Activated naive CD4-positive, alpha-beta T cell treated with anti-CD3 and anti-CD28 coated beads for 36 hours (primary cell): ENCODE measurements at regions of chr2 and their contacts with region 1.

Region 1: GRCh38 chr2:88016086-88016959 is at the start of gene RNU2-63P:
- DNase-seq: peak; percentile 78
- H3K4me3 Mint-ChIP-seq: peak within 1 kb of the TSS; percentile 94
- H3K27ac Mint-ChIP-seq: peak within 1 kb of the TSS; percentile 99
- H3K4me1 Mint-ChIP-seq: peaks cover 18% of the 10 kb centered on the region
- H3K27me3 Mint-ChIP-seq: no peaks in the 10 kb centered on the region
- total RNA-seq, gene RNU2-63P: 12.6 to 13.1 TPM

Region 2: DNA sequence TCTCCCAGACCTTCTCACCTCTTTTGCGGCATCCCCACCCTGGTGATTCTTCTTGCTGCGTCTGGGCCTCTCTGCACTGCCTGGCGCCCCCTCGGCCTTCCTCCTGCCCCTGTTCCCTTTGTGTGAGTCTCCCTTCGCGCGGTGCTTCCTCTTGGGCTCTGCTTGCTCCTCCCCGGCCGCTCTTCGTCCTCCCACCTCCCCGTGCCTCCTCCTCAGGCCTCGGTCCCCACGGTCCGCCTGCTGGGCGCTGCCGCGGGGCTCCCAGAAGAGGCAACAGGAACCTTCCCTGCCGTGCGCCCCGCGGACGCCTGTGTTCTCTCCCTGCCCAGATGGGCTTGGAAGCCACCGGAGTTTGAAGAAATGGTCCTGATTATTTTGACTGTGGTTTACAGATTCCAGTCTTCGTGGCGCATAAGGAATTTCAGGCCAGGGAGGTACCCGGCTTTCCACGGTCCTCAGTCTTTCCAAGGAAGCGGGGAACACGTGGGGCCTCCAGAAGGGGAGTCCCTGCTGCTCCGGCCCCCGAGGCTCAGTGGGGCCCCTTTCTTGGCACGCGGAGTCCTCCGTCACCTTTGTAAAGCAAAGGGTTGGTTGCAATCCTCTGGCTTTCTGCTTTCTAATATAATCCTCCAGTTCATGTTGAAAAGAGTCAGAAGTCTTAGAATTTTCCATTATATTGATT is 13.1 kb before region 1 on chr2:
- CTCF ChIA-PET with region 1: interaction called, 23 read pairs
- intact Hi-C with region 1: no loop called
- DNase-seq: no peak
- H3K4me3 Mint-ChIP-seq: no peak overlapping the region
- H3K27ac Mint-ChIP-seq: no peak overlapping the region
- H3K4me1 Mint-ChIP-seq: peaks cover 6% of the 10 kb centered on the region
- H3K27me3 Mint-ChIP-seq: no peaks in the 10 kb centered on the region

Region 3: GRCh38 chr2:88114889-88115288 is 98.6 kb after region 1 on chr2:
- CTCF ChIA-PET with region 1: no interaction called
- intact Hi-C with region 1: no loop called
- DNase-seq: no peak
- H3K4me3 Mint-ChIP-seq: no peak overlapping the region
- H3K27ac Mint-ChIP-seq: no peak overlapping the region
- H3K4me1 Mint-ChIP-seq: no peaks in the 10 kb centered on the region
- H3K27me3 Mint-ChIP-seq: no peaks in the 10 kb centered on the region

Region 4: GRCh38 chr2:88296247-88296646 is 279.9 kb after region 1 on chr2:
- CTCF ChIA-PET with region 1: no interaction called
- intact Hi-C with region 1: no loop called
- DNase-seq: no peak
- H3K4me3 Mint-ChIP-seq: no peak overlapping the region
- H3K27ac Mint-ChIP-seq: no peak overlapping the region
- H3K4me1 Mint-ChIP-seq: no peaks in the 10 kb centered on the region
- H3K27me3 Mint-ChIP-seq: peaks cover 3% of the 10 kb centered on the region

Region 5: DNA sequence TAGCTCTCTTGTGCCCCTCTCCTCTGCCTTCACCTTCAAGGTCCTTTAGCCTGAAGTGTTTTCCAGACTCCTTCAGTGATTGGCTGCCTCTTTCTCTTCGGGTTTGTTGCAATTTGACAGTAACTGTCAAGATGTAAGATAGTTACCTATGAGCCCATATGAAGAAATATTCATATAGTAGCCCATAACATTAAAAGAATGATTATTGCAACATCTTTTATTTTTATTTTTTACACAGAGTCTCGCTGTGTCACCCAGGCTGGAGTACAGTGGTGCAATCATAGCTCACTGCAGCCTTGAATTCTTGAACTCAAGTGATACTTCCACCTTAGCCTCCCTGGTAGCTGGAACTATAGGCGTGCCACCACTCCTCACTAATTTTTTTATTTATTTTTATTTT is 355.7 kb after region 1 on chr2:
- CTCF ChIA-PET with region 1: no interaction called
- intact Hi-C with region 1: no loop called
- DNase-seq: no peak
- H3K4me3 Mint-ChIP-seq: no peak overlapping the region
- H3K27ac Mint-ChIP-seq: no peak overlapping the region
- H3K4me1 Mint-ChIP-seq: no peaks in the 10 kb centered on the region
- H3K27me3 Mint-ChIP-seq: peaks cover 5% of the 10 kb centered on the region